ENCODE measurements at regions of chr14 and their contacts with region 1.

Region 1: GRCh38 chr14:24332268-24332993 is 2.4 kb downstream of the ADCY4 start:
- DNase-seq: peak in 3 of 4 donors; percentile 72 to 92 (median 75)
- ATAC-seq: peak; percentile 79
- H3K4me3 ChIP-seq: peak overlapping the region; percentile 19 to 46
- H3K27ac ChIP-seq: peak overlapping the region in 1 of 2 donors; percentile 74
- H3K4me1 ChIP-seq: peaks cover 26 to 97% of the 10 kb centered on the region in 2 donors
- H3K27me3 ChIP-seq: peaks cover 9 to 27% of the 10 kb centered on the region in 2 donors
- CTCF ChIP-seq: peak; percentile 54 to 80

Region 2: DNA sequence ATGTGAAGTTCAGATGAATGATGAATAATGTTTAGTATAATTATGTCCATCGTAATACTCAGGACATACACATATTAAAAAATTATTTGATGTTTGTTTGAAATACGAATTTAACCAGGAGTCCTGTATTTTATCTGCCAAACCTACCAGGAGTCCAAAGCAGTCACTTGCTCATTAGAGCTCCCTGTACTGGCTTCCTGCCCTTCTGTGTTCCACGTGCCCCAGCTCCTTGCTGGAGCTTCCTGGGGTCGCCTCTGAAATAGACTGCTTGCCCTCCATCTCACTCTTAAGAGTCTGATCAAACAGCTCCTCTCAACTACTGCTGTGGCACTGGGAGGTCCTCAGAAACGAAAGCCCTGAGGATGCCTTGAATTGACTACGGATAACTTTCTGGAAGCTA is 466.2 kb before region 1 on chr14:
- intact Hi-C with region 1: no loop called
- DNase-seq: no peak
- ATAC-seq: no peak
- H3K4me3 ChIP-seq: no peak overlapping the region
- H3K27ac ChIP-seq: no peak overlapping the region
- H3K4me1 ChIP-seq: no peaks in the 10 kb centered on the region
- H3K27me3 ChIP-seq: peaks cover 0 to 4% of the 10 kb centered on the region in 2 donors
- CTCF ChIP-seq: no peak

Region 3: GRCh38 chr14:24271134-24271833 is 61.1 kb before region 1 on chr14 and contains the start of gene RABGGTA:
- intact Hi-C with region 1: no loop called
- DNase-seq: peak; percentile 72 to 97 (median 92)
- ATAC-seq: peak; percentile 91
- H3K4me3 ChIP-seq: peak within 1 kb of the TSS; percentile 77 to 84
- H3K27ac ChIP-seq: peak within 1 kb of the TSS; percentile 97 to 99
- H3K4me1 ChIP-seq: peaks cover 23 to 54% of the 10 kb centered on the region in 2 donors
- H3K27me3 ChIP-seq: no peaks in the 10 kb centered on the region
- CTCF ChIP-seq: peak; percentile 66 to 78
- polyA plus RNA-seq, gene RABGGTA: 20.2 to 28.7 (median 25.6) TPM

Region 4: GRCh38 chr14:24431569-24432258 is 99.3 kb after region 1 on chr14:
- intact Hi-C with region 1: loop called (anchors 5 to 10 kb)
- DNase-seq: peak; percentile 74 to 94 (median 92)
- ATAC-seq: peak; percentile 81
- H3K4me3 ChIP-seq: peak overlapping the region; percentile 83 to 90
- H3K27ac ChIP-seq: peak overlapping the region; percentile 96 to 97
- H3K4me1 ChIP-seq: peaks cover 23 to 45% of the 10 kb centered on the region in 2 donors
- H3K27me3 ChIP-seq: no peaks in the 10 kb centered on the region
- CTCF ChIP-seq: peak; percentile 86 to 94

Region 5: GRCh38 chr14:24678801-24679247 is 346.4 kb after region 1 on chr14:
- intact Hi-C with region 1: loop called in 1 of 2 experiments (anchors 10 kb)
- DNase-seq: peak; percentile 65 to 91 (median 74)
- ATAC-seq: peak; percentile 100
- H3K4me3 ChIP-seq: peak overlapping the region; percentile 16 to 20
- H3K27ac ChIP-seq: no peak overlapping the region
- H3K4me1 ChIP-seq: peaks cover 0 to 19% of the 10 kb centered on the region in 2 donors
- H3K27me3 ChIP-seq: no peaks in the 10 kb centered on the region
- CTCF ChIP-seq: peak; percentile 94 to 98